ENCODE measurements at regions of chr22 and their contacts with region 1.

Region 1: DNA sequence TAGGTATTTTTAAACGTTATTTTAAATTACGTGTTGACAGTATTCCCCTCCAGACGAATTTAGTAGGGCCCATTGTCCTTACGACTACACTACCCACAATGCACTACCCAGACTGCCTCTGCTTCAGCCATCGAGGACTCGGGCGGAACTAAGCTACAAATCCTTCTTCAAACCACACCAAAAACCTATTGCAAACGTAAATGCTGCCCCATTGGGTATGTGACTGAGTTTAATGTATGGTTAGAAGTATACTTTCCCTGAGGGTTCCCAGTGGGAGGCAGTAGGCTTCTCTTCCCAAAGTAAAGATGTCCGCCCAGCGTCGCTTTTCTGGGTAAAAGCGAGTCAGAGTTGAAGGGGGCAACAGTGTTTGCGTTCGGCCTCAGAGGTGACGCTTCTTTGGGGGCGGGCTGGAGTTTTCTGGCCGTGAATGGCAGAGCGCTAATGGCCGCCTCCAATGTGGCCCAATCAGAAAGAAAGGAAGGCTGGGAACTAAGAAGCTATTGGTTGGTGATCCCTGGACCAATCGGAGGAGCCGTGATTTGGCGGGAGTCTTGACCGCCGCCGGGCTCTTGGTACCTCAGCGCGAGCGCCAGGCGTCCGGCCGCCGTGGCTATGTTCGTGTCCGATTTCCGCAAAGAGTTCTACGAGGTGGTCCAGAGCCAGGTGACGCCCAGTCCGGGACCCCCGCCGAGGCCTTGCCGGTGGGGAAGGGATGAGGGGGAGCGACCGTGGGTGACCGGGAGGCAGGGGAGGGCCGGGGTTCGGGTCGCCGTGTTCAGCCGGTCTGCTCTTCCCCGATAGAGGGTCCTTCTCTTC is at the start of gene CDC45:
- DNase-seq: peak; percentile 88 to 98 (median 97)
- H3K4me3 ChIP-seq: peak within 1 kb of the TSS; percentile 74 to 100 (median 92)
- H3K27ac ChIP-seq: peak within 1 kb of the TSS; percentile 92 to 100 (median 99)
- H3K27me3 ChIP-seq: no peaks in the 10 kb centered on the region
- CTCF ChIP-seq: peak in 13 of 56 donors; percentile 5 to 38 (median 21)
- total RNA-seq, gene CDC45: 0.28 to 1.9 (median 0.81) TPM in 39 of 120 experiments, not detected in the others

Region 2: DNA sequence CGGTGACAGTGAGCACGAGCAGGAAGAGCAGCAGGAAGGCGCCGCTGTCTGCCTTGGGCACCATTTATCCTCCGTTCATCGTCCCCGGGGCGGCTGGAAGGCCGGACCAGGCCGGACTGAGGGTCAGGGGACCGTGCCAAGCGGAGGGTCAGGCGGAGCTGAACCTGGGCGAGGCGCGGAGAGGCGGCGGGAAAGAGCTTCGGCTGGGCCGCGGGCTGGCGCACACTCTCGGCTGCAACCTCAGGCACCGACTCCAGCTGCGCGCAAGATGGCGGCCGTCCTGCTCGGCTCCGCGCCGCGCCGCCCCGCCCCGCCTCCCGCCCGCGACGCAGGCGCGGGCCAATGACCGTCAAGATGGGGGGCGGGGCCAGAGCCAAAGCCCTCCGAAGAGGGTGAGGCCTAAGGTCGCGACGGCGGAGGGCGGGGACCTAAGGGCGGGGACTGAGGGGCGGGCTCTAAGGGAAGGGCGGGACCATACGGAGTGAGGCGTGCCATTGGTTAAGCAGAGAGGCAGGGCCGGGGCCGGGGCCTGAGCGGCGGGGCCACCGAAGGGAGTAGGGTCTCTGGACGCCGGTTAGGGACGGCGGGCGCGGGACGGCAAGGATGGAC is 357.3 kb before region 1 on chr22 and contains the start of gene DGCR2:
- intact Hi-C with region 1: loop called in 1 of 2 experiments (anchors 5 kb)
- DNase-seq: peak; percentile 91 to 98 (median 96)
- H3K4me3 ChIP-seq: peak within 1 kb of the TSS; percentile 68 to 100 (median 93)
- H3K27ac ChIP-seq: peak within 1 kb of the TSS in 56 of 59 donors; percentile 45 to 96 (median 88)
- H3K27me3 ChIP-seq: no peaks in the 10 kb centered on the region
- CTCF ChIP-seq: peak in 13 of 56 donors; percentile 5 to 31 (median 12)
- total RNA-seq, gene DGCR2: 71.8 to 123 (median 94.1) TPM

Region 3: GRCh38 chr22:19143967-19144400 is 335.6 kb before region 1 on chr22:
- intact Hi-C with region 1: loop called in 1 of 2 experiments (anchors 10 kb)
- DNase-seq: peak in 1 of 10 donors; percentile 22
- H3K4me3 ChIP-seq: peak overlapping the region; percentile 55 to 100 (median 93)
- H3K27ac ChIP-seq: peak overlapping the region in 51 of 59 donors; percentile 16 to 89 (median 69)
- H3K27me3 ChIP-seq: peaks cover 0 to 17% (median 12%) of the 10 kb centered on the region in 45 donors
- CTCF ChIP-seq: no peak

Region 4: GRCh38 chr22:19178656-19179496 is 300.7 kb before region 1 on chr22 and contains the start of gene SLC25A1:
- intact Hi-C with region 1: loop called in 1 of 2 experiments (anchors 5 kb)
- DNase-seq: peak; percentile 84 to 96 (median 90)
- H3K4me3 ChIP-seq: peak within 1 kb of the TSS; percentile 55 to 96 (median 82)
- H3K27ac ChIP-seq: peak within 1 kb of the TSS in 58 of 59 donors; percentile 22 to 93 (median 81)
- H3K27me3 ChIP-seq: no peaks in the 10 kb centered on the region
- CTCF ChIP-seq: no peak
- total RNA-seq, gene SLC25A1: 20.9 to 57.4 (median 34.4) TPM

Region 5: GRCh38 chr22:19447388-19448075 is 32.0 kb before region 1 on chr22 and contains the start of gene C22orf39:
- intact Hi-C with region 1: loop called in 1 of 2 experiments (anchors 5 kb)
- DNase-seq: peak; percentile 90 to 97 (median 95)
- H3K4me3 ChIP-seq: peak within 1 kb of the TSS; percentile 63 to 99 (median 93)
- H3K27ac ChIP-seq: peak within 1 kb of the TSS; percentile 21 to 97 (median 87)
- H3K27me3 ChIP-seq: no peaks in the 10 kb centered on the region
- CTCF ChIP-seq: peak in 12 of 56 donors; percentile 6 to 39 (median 20)
- total RNA-seq, gene C22orf39: 37.4 to 76.4 (median 59.4) TPM

Region 6: GRCh38 chr22:19629720-19630419 is 150.3 kb after region 1 on chr22:
- intact Hi-C with region 1: loop called in 1 of 2 experiments (anchors 10 kb)
- DNase-seq: peak; percentile 63 to 86 (median 77)
- H3K4me3 ChIP-seq: peak overlapping the region in 3 of 59 donors; percentile 5 to 27 (median 15)
- H3K27ac ChIP-seq: peak overlapping the region in 2 of 59 donors; percentile 22 to 37
- H3K27me3 ChIP-seq: peaks cover 0 to 7% (median 0%) of the 10 kb centered on the region in 45 donors
- CTCF ChIP-seq: peak; percentile 53 to 98 (median 90)

Region 7: GRCh38 chr22:19717691-19718455 is 238.3 kb after region 1 on chr22:
- intact Hi-C with region 1: loop called in 1 of 2 experiments (anchors 10 kb)
- DNase-seq: peak in 9 of 10 donors; percentile 52 to 85 (median 65)
- H3K4me3 ChIP-seq: peak overlapping the region; percentile 20 to 77 (median 66)
- H3K27ac ChIP-seq: peak overlapping the region in 42 of 59 donors; percentile 61 to 97 (median 84)
- H3K27me3 ChIP-seq: peaks cover 0 to 5% (median 0%) of the 10 kb centered on the region in 45 donors
- CTCF ChIP-seq: peak; percentile 70 to 99 (median 93)

Measured in dorsolateral prefrontal cortex (tissue), 120 donors.